ENCODE measurements at regions of chr15 and their contacts with region 1.

Region 1: DNA sequence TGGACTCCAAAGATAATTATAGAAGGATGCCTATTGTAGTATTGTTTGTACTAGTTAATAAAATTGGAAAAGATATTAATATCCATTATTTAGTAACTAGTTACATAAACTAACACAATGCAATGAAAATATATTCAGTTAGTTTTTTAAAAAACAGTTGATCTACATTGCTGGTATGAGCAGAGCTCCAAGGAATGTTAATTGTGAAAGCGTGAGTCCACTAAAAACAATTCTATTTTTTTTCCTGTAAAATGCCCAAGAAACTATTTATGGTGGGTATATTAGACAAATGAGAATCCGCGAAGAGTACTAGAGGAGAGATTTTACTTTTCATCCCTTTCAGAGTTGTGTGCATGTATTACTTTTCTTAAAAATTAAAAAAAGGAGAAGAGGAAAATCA is 104.3 kb downstream of the MCTP2 start:
- DNase-seq: no peak
- H3K4me3 ChIP-seq: no peak overlapping the region
- H3K27ac ChIP-seq: no peak overlapping the region
- H3K27me3 ChIP-seq: peaks cover 3% of the 10 kb centered on the region
- CTCF ChIP-seq: no peak

Region 2: GRCh38 chr15:94163999-94164807 is 171.4 kb before region 1 on chr15:
- CTCF ChIA-PET with region 1: interaction called, 52 read pairs
- POLR2A ChIA-PET with region 1: no interaction called
- DNase-seq: peak; percentile 49
- H3K4me3 ChIP-seq: no peak overlapping the region
- H3K27ac ChIP-seq: no peak overlapping the region
- H3K27me3 ChIP-seq: no peaks in the 10 kb centered on the region
- CTCF ChIP-seq: peak; percentile 83

Region 3: GRCh38 chr15:94370206-94370935 is 34.8 kb after region 1 on chr15:
- CTCF ChIA-PET with region 1: no interaction called
- POLR2A ChIA-PET with region 1: no interaction called
- DNase-seq: no peak
- H3K4me3 ChIP-seq: no peak overlapping the region
- H3K27ac ChIP-seq: no peak overlapping the region
- H3K27me3 ChIP-seq: no peaks in the 10 kb centered on the region
- CTCF ChIP-seq: no peak

Region 4: GRCh38 chr15:94412979-94413746 is 77.5 kb after region 1 on chr15:
- CTCF ChIA-PET with region 1: no interaction called
- POLR2A ChIA-PET with region 1: no interaction called
- DNase-seq: no peak
- H3K4me3 ChIP-seq: no peak overlapping the region
- H3K27ac ChIP-seq: no peak overlapping the region
- H3K27me3 ChIP-seq: no peaks in the 10 kb centered on the region
- CTCF ChIP-seq: peak; percentile 61

Region 5: GRCh38 chr15:94467034-94467433 is 131.4 kb after region 1 on chr15:
- CTCF ChIA-PET with region 1: no interaction called
- POLR2A ChIA-PET with region 1: no interaction called
- DNase-seq: no peak
- H3K4me3 ChIP-seq: no peak overlapping the region
- H3K27ac ChIP-seq: no peak overlapping the region
- H3K27me3 ChIP-seq: no peaks in the 10 kb centered on the region
- CTCF ChIP-seq: no peak

Measured in AG04450 (cell line).